Psoas muscle (tissue), 8 donors: ENCODE measurements at regions of chr16 and their contacts with region 1.

Region 1: GRCh38 chr16:54929090-54930004 is 1.3 kb upstream of the IRX5 start:
- DNase-seq: peak; percentile 98 to 100
- ATAC-seq: peak; percentile 81 to 97 (median 86)
- H3K4me3 ChIP-seq: peak overlapping the region; percentile 89
- H3K27ac ChIP-seq: peak overlapping the region; percentile 97
- H3K4me1 ChIP-seq: peaks cover 14% of the 10 kb centered on the region
- H3K27me3 ChIP-seq: peaks cover 0 to 27% (median 3%) of the 10 kb centered on the region in 3 donors
- CTCF ChIP-seq: peak; percentile 25

Region 2: GRCh38 chr16:53773150-53773846 is 1156.0 kb before region 1 on chr16:
- intact Hi-C with region 1: loop called in 1 of 2 experiments (anchors 10 kb)
- DNase-seq: no peak
- ATAC-seq: peak; percentile 76 to 89 (median 82)
- H3K4me3 ChIP-seq: no peak overlapping the region
- H3K27ac ChIP-seq: no peak overlapping the region
- H3K4me1 ChIP-seq: peaks cover 39% of the 10 kb centered on the region
- H3K27me3 ChIP-seq: no peaks in the 10 kb centered on the region
- CTCF ChIP-seq: peak; percentile 60

Region 3: GRCh38 chr16:53945996-53946395 is 983.4 kb before region 1 on chr16:
- intact Hi-C with region 1: loop called (anchors 5 to 10 kb)
- DNase-seq: no peak
- ATAC-seq: peak; percentile 69 to 93 (median 80)
- H3K4me3 ChIP-seq: no peak overlapping the region
- H3K27ac ChIP-seq: no peak overlapping the region
- H3K4me1 ChIP-seq: peaks cover 14% of the 10 kb centered on the region
- H3K27me3 ChIP-seq: no peaks in the 10 kb centered on the region
- CTCF ChIP-seq: peak; percentile 79

Region 4: DNA sequence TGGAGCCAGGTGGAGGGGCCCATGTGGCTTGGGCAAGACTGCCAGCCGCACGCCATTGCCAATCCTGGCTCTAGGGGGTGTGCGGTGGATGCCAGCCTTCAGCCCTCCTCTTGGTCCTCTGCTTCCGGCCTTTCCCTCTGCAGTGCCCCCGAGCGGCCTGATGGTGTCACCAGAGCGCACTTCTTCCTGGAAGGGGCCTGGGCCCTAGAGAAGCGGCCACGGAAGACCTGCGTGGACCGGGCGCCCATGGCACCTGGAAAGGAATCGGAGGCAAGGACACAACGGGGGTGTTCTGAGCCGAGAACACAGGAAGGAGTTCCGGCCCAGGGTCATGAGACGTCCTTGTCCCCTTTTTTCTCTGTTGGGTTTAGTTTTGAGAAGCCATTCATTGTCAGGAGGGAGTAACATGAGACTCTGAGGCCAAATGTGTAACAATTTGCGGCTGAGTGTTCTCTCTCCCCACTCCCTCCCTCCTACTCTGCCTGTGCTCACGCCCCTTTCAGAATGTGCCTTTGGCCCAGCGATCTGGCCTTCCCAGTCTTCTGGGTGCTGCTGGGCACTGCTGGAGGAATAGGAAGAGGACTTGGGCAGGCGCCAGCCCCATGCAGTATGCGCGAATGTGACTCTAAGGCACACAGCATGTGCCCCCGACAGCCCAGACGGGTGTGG is 735.5 kb before region 1 on chr16:
- intact Hi-C with region 1: loop called (anchors 10 kb)
- DNase-seq: peak; percentile 70 to 89
- ATAC-seq: peak; percentile 92 to 94 (median 94)
- H3K4me3 ChIP-seq: peak overlapping the region; percentile 55
- H3K27ac ChIP-seq: peak overlapping the region; percentile 76
- H3K4me1 ChIP-seq: no peaks in the 10 kb centered on the region
- H3K27me3 ChIP-seq: no peaks in the 10 kb centered on the region
- CTCF ChIP-seq: peak; percentile 85

Region 5: DNA sequence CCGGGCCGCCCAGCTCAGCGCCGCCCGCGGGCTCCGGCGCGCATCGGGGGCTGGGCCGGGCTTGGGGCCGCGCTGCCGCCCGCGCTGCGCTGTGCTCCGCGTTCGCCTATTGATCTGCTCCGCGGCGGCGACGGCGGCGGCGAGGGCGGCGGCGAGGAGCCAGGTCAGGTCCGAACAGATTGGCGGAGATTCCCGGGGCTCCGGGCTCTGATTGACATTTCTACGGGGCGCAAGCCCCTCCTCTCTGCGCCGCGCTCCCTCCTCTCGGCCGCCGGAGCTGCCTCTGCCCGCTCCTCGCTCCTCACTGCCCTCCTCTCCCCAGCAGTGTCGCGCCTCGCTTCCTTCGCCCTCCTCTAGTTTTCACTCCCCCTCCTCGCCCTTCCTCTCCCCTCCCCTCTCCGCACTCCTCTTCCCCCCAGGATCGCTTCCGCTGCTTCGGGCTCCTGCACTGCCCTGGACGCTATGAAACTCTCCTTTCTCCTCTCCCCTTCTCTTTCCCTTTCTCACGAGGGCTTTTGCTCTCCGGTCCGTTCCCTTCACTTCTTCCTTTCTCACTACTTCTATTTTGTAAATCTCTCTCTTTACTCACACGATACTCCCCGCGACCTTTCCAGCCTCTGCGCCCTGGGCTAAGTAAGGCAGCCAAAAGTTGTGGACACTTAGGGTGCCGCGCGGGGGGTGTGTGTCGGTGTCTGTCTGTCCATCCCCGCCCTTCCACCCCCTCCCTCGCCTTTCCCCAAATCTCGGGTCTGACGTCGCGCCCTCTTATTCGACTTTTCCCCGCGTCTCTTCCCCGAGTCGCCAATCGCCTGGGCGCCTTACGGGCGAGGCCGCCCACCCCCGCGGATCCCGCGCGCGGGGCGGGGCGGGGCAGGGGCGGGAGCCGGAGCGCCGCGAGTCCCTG is 643.0 kb before region 1 on chr16 and contains the start of gene IRX3:
- intact Hi-C with region 1: loop called in 1 of 2 experiments (anchors 10 kb)
- DNase-seq: peak; percentile 69 to 93
- ATAC-seq: peak; percentile 76 to 86 (median 82)
- H3K4me3 ChIP-seq: peak within 1 kb of the TSS; percentile 78
- H3K27ac ChIP-seq: peak within 1 kb of the TSS; percentile 76
- H3K4me1 ChIP-seq: no peaks in the 10 kb centered on the region
- H3K27me3 ChIP-seq: peaks cover 0 to 57% (median 0%) of the 10 kb centered on the region in 3 donors
- CTCF ChIP-seq: no peak
- total RNA-seq, gene IRX3: 1.2 to 27.6 (median 5.7) TPM

Region 6: GRCh38 chr16:54724346-54724925 is 204.9 kb before region 1 on chr16:
- intact Hi-C with region 1: no loop called
- DNase-seq: no peak
- ATAC-seq: no peak
- H3K4me3 ChIP-seq: no peak overlapping the region
- H3K27ac ChIP-seq: no peak overlapping the region
- H3K4me1 ChIP-seq: no peaks in the 10 kb centered on the region
- H3K27me3 ChIP-seq: peaks cover 0 to 2% (median 0%) of the 10 kb centered on the region in 3 donors
- CTCF ChIP-seq: no peak

Region 7: DNA sequence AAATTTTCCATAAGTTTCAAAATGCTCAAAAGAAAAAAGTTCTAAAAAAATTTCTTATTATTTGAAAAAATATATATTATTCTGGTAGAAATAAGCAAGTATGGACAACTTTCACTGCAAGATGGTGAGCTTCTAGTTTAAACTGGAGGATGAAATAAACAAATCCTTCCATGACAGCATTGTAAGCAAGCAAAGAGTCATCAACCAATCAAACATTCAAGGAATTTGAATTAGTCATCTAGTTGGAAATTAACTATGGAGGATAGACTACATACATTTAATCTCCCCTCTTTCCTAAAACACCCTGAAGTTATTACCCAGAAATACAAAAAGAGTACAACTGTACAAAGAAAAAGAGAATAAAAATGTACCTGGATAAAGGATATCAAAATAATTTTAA is 49.7 kb before region 1 on chr16:
- intact Hi-C with region 1: no loop called
- DNase-seq: no peak
- ATAC-seq: no peak
- H3K4me3 ChIP-seq: no peak overlapping the region
- H3K27ac ChIP-seq: no peak overlapping the region
- H3K4me1 ChIP-seq: no peaks in the 10 kb centered on the region
- H3K27me3 ChIP-seq: no peaks in the 10 kb centered on the region
- CTCF ChIP-seq: no peak

Region 8: DNA sequence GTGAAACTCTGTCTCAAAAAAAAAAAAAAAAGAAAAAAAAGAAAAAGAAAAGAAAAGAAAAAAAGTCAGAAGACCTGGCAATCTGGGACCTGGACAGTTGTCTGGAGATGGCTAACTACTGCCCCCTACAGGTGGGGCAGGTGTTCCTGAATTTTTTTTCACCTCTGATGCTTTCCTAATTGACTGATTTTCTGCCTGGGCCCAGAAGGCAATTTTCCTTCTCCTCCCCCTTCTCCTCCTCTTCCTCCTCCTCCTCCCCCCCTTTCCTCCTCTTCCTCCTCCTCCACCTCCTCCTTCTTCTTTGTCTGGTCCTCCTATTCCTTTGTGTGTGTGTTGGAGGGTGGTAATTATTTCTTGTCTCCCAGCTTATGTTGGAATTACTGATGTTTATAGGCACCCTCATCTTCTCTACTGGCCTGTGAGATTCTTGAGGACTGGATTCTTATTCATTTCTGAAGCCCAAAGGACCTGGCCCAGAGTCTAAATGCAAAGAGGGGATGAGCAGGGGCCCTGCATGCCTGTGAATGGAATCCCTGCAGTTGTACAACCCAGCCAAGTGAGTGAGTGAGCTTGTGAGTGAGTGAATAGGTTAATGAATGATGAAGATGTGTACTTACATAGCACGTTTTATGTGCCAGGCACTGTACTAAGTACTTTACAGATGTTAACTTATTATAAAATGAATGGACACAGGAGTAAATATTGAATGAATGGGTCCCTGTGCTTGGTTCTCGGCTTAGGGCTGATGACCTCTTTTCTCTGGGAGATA is 28.2 kb after region 1 on chr16:
- intact Hi-C with region 1: no loop called
- DNase-seq: no peak
- ATAC-seq: peak in 1 of 4 donors; percentile 65
- H3K4me3 ChIP-seq: no peak overlapping the region
- H3K27ac ChIP-seq: no peak overlapping the region
- H3K4me1 ChIP-seq: no peaks in the 10 kb centered on the region
- H3K27me3 ChIP-seq: no peaks in the 10 kb centered on the region
- CTCF ChIP-seq: peak; percentile 56

Region 9: GRCh38 chr16:55120408-55120807 is 191.1 kb after region 1 on chr16:
- intact Hi-C with region 1: no loop called
- DNase-seq: no peak
- ATAC-seq: peak in 3 of 4 donors; percentile 61 to 73 (median 67)
- H3K4me3 ChIP-seq: no peak overlapping the region
- H3K27ac ChIP-seq: no peak overlapping the region
- H3K4me1 ChIP-seq: no peaks in the 10 kb centered on the region
- H3K27me3 ChIP-seq: no peaks in the 10 kb centered on the region
- CTCF ChIP-seq: peak; percentile 29

Region 10: GRCh38 chr16:55370762-55371482 is 441.6 kb after region 1 on chr16:
- intact Hi-C with region 1: loop called in 1 of 2 experiments (anchors 2 kb)
- DNase-seq: peak; percentile 65 to 81
- ATAC-seq: peak; percentile 83 to 90 (median 87)
- H3K4me3 ChIP-seq: no peak overlapping the region
- H3K27ac ChIP-seq: no peak overlapping the region
- H3K4me1 ChIP-seq: peaks cover 6% of the 10 kb centered on the region
- H3K27me3 ChIP-seq: peaks cover 0 to 3% (median 0%) of the 10 kb centered on the region in 3 donors
- CTCF ChIP-seq: peak; percentile 60